ENCODE measurements at regions of chr12 and their contacts with region 1.

Region 1: DNA sequence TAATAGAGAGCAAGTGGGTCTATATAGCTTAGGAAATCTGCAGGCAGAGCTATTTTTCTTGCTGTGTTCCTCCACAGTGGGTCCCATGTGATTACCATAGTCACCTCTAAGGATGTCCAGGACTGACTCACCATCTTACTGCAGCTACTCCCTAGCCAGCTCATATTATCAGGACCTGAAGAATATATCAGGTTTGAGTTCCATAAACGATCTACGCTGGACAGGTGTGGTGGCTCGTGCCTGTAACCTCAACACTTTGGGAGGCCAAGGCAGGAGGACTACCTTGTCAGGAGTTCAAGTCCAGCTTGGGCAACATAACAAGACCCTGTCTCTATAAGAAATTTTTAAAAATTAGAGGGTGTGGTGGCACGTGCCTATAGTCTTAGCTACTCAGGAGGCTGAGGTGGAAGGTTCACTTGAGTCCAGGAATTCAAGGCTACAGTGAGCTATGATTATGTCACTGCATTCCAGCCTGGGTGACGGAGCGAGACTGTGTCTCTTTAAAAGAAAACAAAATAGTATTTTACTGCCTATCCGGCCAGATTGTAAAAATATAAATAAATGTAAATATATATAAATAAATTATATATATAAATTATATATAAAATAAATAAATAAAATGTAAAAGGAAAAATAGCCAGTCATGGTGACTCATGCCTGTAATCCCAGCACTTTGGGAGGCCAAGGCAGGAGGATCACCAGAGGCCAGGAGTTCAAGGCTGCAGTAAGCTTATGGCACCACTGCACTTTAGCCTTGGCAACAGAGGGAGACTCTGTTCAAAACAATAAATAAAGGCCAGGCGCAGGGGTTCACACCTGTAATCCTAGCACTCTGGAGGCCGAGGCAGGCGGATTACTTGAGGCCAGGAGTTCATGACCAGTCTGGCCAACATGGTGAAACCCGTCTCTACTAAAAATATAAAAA is 6.9 kb upstream of the SPRYD4 start:
- DNase-seq: no peak
- ATAC-seq: no peak
- H3K4me3 ChIP-seq: no peak overlapping the region
- H3K27ac ChIP-seq: no peak overlapping the region
- H3K4me1 ChIP-seq: no peaks in the 10 kb centered on the region
- H3K27me3 ChIP-seq: no peaks in the 10 kb centered on the region

Region 2: DNA sequence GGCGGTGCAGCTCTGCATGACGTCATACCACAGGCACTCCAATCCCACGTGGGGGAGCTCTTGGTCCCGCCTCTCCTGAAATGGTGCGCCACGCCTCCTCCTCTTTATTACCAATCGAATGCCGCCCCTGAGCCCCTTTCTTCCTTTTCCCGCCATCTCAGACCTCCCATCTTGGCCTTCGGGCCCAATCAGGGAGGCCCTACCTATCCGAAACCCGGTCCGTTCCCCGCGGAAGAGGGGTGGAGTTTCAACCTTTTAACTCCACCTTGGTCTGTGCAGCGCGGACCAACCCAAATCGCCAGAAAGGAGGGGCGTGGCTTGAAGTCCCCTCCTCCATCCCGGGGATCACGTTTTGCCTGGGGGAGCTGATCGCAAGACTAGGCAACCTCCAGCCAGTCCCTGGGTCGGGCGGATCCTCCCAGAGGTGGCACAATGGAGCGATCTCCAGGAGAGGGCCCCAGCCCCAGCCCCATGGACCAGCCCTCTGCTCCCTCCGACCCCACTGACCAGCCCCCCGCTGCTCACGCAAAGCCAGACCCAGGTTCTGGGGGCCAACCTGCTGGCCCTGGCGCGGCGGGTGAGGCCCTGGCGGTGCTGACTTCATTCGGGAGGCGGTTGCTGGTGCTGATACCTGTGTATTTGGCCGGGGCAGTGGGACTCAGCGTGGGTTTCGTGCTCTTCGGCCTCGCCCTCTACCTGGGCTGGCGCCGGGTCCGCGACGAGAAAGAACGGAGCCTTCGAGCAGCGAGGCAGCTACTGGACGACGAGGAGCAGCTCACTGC is 333.4 kb before region 1 on chr12 and contains the start of gene ESYT1:
- intact Hi-C with region 1: loop called in 1 of 4 experiments (anchors 5 kb)
- DNase-seq: peak; percentile 98 to 99 (median 99)
- ATAC-seq: peak; percentile 96 to 97
- H3K4me3 ChIP-seq: peak within 1 kb of the TSS; percentile 76
- H3K27ac ChIP-seq: peak within 1 kb of the TSS; percentile 85
- H3K4me1 ChIP-seq: no peaks in the 10 kb centered on the region
- H3K27me3 ChIP-seq: no peaks in the 10 kb centered on the region
- total RNA-seq, gene ESYT1: 30.7 to 38.5 (median 33.6) TPM

Region 3: GRCh38 chr12:56616925-56617324 is 155.4 kb after region 1 on chr12:
- intact Hi-C with region 1: no loop called
- DNase-seq: no peak
- ATAC-seq: peak in 1 of 2 donors; percentile 67
- H3K4me3 ChIP-seq: no peak overlapping the region
- H3K27ac ChIP-seq: peak overlapping the region; percentile 57
- H3K4me1 ChIP-seq: peaks cover 2% of the 10 kb centered on the region
- H3K27me3 ChIP-seq: no peaks in the 10 kb centered on the region